HCT116 (cell line): ENCODE measurements at regions of chr5 and their contacts with region 1.

Region 1: GRCh38 chr5:32419791-32420190 is 24.7 kb downstream of the ZFR start:
- DNase-seq: no peak
- ATAC-seq: no peak
- H3K4me3 ChIP-seq: no peak overlapping the region
- H3K27ac ChIP-seq: no peak overlapping the region
- H3K4me1 ChIP-seq: no peaks in the 10 kb centered on the region
- H3K27me3 ChIP-seq: no peaks in the 10 kb centered on the region
- CTCF ChIP-seq: no peak
- POLR2A ChIP-seq: no peak
- RAD21 ChIP-seq: no peak

Region 2: DNA sequence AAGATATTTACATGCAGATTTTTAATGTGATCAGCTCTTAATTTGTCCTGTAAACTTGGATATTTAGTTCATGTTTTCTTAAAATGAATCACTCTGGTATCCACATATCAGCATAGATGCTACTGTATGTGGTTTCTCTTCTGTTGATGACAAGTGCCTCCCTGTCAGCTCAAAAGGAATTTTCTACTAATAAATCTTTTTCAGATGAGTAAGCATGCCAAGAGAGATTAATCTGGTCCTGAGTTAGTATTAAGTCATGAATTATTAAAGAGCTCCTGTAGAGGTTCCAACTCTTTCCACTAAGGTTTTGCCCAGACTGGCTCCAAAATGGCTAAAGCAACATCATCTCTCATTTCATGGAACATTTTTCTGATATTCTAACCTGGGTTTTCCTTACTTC is 374.9 kb before region 1 on chr5:
- CTCF ChIA-PET with region 1: no interaction called
- POLR2A ChIA-PET with region 1: no interaction called
- RAD21 ChIA-PET with region 1: no interaction called
- intact Hi-C with region 1: no loop called
- DNase-seq: no peak
- ATAC-seq: no peak; the same call in 1 of the 2 replicates
- H3K4me3 ChIP-seq: no peak overlapping the region
- H3K27ac ChIP-seq: no peak overlapping the region
- H3K4me1 ChIP-seq: no peaks in the 10 kb centered on the region
- H3K27me3 ChIP-seq: no peaks in the 10 kb centered on the region
- CTCF ChIP-seq: no peak
- POLR2A ChIP-seq: no peak
- RAD21 ChIP-seq: no peak

Region 3: DNA sequence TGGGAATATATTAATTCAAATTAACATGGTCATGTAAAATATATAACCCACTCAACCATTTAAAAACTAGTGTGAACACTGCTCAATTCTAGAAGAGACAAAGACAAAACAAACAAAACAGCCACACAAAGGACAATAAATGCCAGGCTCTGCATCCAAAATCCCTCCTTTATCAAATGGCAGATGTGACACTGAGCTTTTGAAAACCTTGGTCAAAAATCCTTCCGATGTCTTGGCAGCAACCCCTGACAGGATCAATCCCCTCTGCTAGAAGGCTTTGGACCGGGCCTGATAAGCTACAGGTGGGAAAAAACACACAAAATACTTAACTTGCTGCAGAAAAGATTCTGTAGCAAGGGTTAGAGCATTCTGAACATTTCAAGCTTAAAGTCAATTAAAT is 36.7 kb before region 1 on chr5:
- CTCF ChIA-PET with region 1: no interaction called
- POLR2A ChIA-PET with region 1: no interaction called
- RAD21 ChIA-PET with region 1: no interaction called
- intact Hi-C with region 1: loop called (anchors 5 kb)
- DNase-seq: no peak
- ATAC-seq: no peak
- H3K4me3 ChIP-seq: no peak overlapping the region
- H3K27ac ChIP-seq: no peak overlapping the region
- H3K4me1 ChIP-seq: no peaks in the 10 kb centered on the region
- H3K27me3 ChIP-seq: no peaks in the 10 kb centered on the region
- CTCF ChIP-seq: no peak
- POLR2A ChIP-seq: no peak
- RAD21 ChIP-seq: no peak